Colonic mucosa (tissue), 4 donors: ENCODE measurements at regions of chr1 and their contacts with region 1.

Region 1: GRCh38 chr1:192808518-192809306 is at the start of gene RGS2:
- DNase-seq: peak; percentile 92
- H3K4me3 ChIP-seq: peak within 1 kb of the TSS; percentile 68
- H3K27ac ChIP-seq: peak within 1 kb of the TSS; percentile 88
- H3K4me1 ChIP-seq: no peaks in the 10 kb centered on the region
- H3K27me3 ChIP-seq: no peaks in the 10 kb centered on the region
- CTCF ChIP-seq: no peak
- total RNA-seq, gene RGS2: 16.5 to 28.6 TPM

Region 2: GRCh38 chr1:193019442-193020026 is 210.8 kb after region 1 on chr1:
- intact Hi-C with region 1: loop called (anchors 2 kb)
- DNase-seq: no peak
- H3K4me3 ChIP-seq: no peak overlapping the region
- H3K27ac ChIP-seq: no peak overlapping the region
- H3K4me1 ChIP-seq: no peaks in the 10 kb centered on the region
- H3K27me3 ChIP-seq: no peaks in the 10 kb centered on the region
- CTCF ChIP-seq: peak; percentile 42

Region 3: GRCh38 chr1:193121616-193122593 is 313.2 kb after region 1 on chr1 and contains the start of gene CDC73:
- intact Hi-C with region 1: loop called (anchors 10 kb)
- DNase-seq: peak; percentile 99
- H3K4me3 ChIP-seq: peak within 1 kb of the TSS; percentile 77
- H3K27ac ChIP-seq: peak within 1 kb of the TSS; percentile 99
- H3K4me1 ChIP-seq: peaks cover 7% of the 10 kb centered on the region
- H3K27me3 ChIP-seq: no peaks in the 10 kb centered on the region
- CTCF ChIP-seq: peak; percentile 92
- total RNA-seq, gene CDC73: 45.3 to 49.1 TPM